ENCODE measurements at regions of chr1 and their contacts with region 1.

Region 1: GRCh38 chr1:30707412-30708360 is 15.7 kb downstream of the MATN1 start:
- DNase-seq: no peak
- H3K4me3 ChIP-seq: no peak overlapping the region
- H3K27ac ChIP-seq: peak overlapping the region; percentile 73
- H3K4me1 ChIP-seq: peaks cover 24% of the 10 kb centered on the region
- H3K27me3 ChIP-seq: no peaks in the 10 kb centered on the region
- CTCF ChIP-seq: peak; percentile 59 to 96 (median 71)
- POLR2A ChIP-seq: no peak

Region 2: DNA sequence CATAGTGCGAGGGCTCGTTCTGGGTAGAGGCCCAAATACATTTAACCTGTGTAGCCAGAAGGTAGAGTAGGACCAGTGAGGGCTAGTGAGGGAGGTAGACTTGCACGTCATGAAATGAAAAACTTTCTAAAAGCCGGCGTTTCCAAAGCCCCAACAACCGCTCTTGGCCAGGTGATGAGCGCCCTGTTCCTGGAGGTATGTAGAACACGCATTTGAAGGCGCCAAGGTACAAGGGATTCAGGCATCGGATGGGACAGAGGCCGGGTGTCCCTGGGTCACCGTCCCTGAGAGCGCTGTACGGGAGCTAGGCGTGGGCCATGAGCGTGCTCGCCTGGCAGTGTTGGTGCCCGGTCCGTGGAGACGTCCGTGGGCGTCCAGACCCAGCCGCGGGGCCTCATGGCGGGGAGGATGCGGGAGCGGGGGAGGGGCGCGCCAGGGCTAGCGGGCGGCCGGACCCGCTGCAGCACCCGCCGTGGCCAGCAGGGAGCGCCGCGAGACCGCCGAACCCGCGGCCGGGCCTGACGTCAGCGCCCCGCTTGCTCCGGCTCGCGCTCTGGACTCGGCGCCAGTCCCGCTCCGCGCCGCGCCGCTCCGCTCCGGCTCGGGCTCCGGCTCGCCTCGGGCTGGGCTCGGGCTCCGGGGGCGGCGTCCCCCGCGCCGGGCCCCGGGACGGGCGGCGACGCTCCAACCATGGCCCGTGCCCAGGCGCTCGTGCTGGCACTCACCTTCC is 1471.6 kb before region 1 on chr1 and contains the start of gene PTPRU:
- intact Hi-C with region 1: loop called (anchors 5 kb)
- DNase-seq: no peak
- H3K4me3 ChIP-seq: peak within 1 kb of the TSS; percentile 78 to 83
- H3K27ac ChIP-seq: peak within 1 kb of the TSS; percentile 84
- H3K4me1 ChIP-seq: peaks cover 24% of the 10 kb centered on the region
- H3K27me3 ChIP-seq: no peaks in the 10 kb centered on the region
- CTCF ChIP-seq: peak; percentile 82 to 85 (median 85)
- POLR2A ChIP-seq: peak in 1 of 2 donors; percentile 59
- total RNA-seq, gene PTPRU: 37.3 TPM

Region 3: DNA sequence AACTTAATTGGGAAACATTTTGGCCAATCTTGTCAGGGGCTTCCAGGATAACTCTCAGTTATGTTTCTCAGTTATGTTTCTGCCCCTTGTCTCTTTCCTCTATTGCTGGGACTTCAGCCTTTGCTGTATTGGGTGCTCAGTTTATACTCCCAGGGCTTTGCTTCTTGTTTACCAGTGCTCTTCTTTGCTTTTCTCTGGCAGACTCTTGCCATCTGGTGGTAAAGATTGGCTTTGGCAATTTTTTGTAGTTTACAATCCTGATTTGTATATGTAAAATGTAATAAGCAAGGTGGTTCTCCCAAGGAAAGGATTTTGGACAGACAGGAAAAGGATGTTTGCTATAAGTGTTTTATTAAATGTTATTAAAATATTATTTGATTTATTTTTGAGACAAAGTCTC is 627.3 kb after region 1 on chr1:
- intact Hi-C with region 1: no loop called
- DNase-seq: no peak
- H3K4me3 ChIP-seq: no peak overlapping the region
- H3K27ac ChIP-seq: no peak overlapping the region
- H3K4me1 ChIP-seq: no peaks in the 10 kb centered on the region
- H3K27me3 ChIP-seq: no peaks in the 10 kb centered on the region
- CTCF ChIP-seq: peak; percentile 14 to 24 (median 14)
- POLR2A ChIP-seq: no peak

Measured in vagina (tissue), 2 donors.